ENCODE measurements at regions of chrX and their contacts with region 1.

Region 1: DNA sequence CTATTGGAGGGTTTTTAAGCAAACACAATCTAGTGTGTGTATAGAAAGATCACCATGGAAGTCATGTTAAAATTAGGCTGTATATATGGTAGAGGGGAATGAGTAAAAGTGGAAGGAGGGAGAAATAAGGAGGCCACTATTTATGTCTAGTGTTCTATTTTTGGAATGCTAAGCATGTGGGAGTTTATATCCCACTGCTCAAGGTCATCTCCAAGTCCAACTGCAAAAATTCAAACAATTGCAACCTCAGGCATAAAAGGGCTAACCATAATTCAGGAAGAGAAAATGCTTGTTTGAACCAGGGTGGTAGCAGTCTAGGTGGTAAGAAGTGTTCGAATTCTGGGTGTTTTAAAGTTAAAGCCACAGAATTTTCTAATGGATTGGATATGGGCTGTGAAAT is 39.2 kb downstream of the SERPINA7 start:
- DNase-seq: no peak
- H3K4me3 ChIP-seq: no peak overlapping the region
- H3K27ac ChIP-seq: no peak overlapping the region
- H3K4me1 ChIP-seq: no peaks in the 10 kb centered on the region
- H3K27me3 ChIP-seq: peaks cover 0 to 15% of the 10 kb centered on the region in 2 donors
- CTCF ChIP-seq: no peak
- POLR2A ChIP-seq: no peak

Region 2: GRCh38 chrX:106415276-106415895 is 416.1 kb after region 1 on chrX:
- intact Hi-C with region 1: loop called (anchors 5 kb)
- DNase-seq: no peak
- H3K4me3 ChIP-seq: no peak overlapping the region
- H3K27ac ChIP-seq: no peak overlapping the region
- H3K4me1 ChIP-seq: no peaks in the 10 kb centered on the region
- H3K27me3 ChIP-seq: peaks cover 0 to 35% of the 10 kb centered on the region in 2 donors
- CTCF ChIP-seq: peak in 2 of 3 donors; percentile 21 to 33
- POLR2A ChIP-seq: no peak

Region 3: DNA sequence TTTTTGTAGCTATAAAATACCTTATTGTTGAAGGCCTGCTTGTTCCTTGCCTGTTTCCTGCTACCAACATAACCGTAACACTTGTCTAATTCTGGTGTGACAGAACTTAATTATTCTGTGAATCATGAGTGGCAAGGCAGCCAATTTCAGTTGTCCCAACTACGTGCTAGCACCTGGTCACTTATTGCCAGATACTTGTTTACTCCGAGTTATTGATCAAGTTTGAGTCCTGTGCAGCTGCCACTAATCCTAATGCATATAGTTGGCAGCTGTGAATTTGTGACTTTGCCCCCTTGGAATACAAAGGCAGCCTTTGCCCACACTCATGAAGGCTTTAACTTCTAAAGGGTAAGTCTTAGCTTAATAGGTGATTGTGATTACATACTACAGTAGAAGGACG is 719.4 kb after region 1 on chrX:
- intact Hi-C with region 1: no loop called
- DNase-seq: no peak
- H3K4me3 ChIP-seq: no peak overlapping the region
- H3K27ac ChIP-seq: no peak overlapping the region
- H3K4me1 ChIP-seq: no peaks in the 10 kb centered on the region
- H3K27me3 ChIP-seq: peaks cover 0 to 44% of the 10 kb centered on the region in 2 donors
- CTCF ChIP-seq: no peak
- POLR2A ChIP-seq: no peak